Spleen (tissue), 13 donors: ENCODE measurements at regions of chr7 and their contacts with region 1.

Region 1: DNA sequence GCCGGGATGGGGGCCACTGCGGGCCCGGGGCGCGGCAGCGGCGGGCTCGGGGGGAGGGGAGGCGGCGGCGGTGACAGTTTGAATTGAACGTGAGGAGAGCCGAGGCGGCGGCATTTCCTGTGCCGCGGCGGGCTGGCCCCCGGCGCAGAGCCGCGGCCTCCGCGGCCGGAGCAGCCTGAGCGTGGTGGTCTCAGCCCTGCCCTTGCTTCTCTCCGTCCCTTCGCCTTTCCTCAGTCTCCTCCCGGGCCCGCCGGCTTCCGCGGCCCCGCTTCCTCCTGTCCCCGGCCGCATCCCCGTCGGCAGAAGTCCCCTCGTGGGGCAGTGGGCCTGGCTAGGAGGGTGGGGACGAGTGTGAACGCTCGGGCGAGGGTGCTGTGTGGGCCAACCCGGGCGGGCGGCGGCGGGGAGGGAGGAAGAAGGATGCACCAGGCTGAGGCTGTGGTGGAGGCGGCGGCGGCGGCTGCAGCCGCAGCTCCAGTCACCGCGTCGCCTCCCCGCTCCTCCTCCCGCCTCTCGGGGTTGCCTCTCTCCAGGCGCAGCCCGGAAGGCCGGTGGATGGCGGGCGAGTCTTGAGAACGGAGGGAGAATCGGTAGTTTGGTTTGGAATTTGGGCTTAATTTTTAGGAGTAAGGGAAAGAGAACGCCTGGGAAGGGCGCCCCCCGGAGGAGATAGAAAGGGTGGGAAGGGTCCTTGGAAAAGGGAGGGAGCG is 690 bp downstream of the SEPTIN7 start:
- DNase-seq: peak; percentile 96
- H3K4me3 ChIP-seq: peak overlapping the region; percentile 64 to 91 (median 79)
- H3K27ac ChIP-seq: peak overlapping the region; percentile 98 to 100 (median 99)
- H3K4me1 ChIP-seq: peaks cover 38 to 70% (median 56%) of the 10 kb centered on the region in 6 donors
- H3K27me3 ChIP-seq: no peaks in the 10 kb centered on the region
- CTCF ChIP-seq: peak in 9 of 11 experiments; percentile 14 to 66 (median 52)
- POLR2A ChIP-seq: no peak

Region 2: GRCh38 chr7:35716038-35716803 is 85.3 kb before region 1 on chr7:
- intact Hi-C with region 1: loop called (anchors 10 kb)
- DNase-seq: no peak
- H3K4me3 ChIP-seq: peak overlapping the region in 2 of 8 donors; percentile 7 to 13
- H3K27ac ChIP-seq: peak overlapping the region in 2 of 8 donors; percentile 9 to 37
- H3K4me1 ChIP-seq: peaks cover 0 to 11% (median 6%) of the 10 kb centered on the region in 6 donors
- H3K27me3 ChIP-seq: no peaks in the 10 kb centered on the region
- CTCF ChIP-seq: no peak
- POLR2A ChIP-seq: no peak

Region 3: GRCh38 chr7:35869810-35870209 is 68.3 kb after region 1 on chr7:
- intact Hi-C with region 1: loop called (anchors 5 kb)
- DNase-seq: no peak
- H3K4me3 ChIP-seq: no peak overlapping the region
- H3K27ac ChIP-seq: peak overlapping the region in 2 of 8 donors; percentile 26 to 50
- H3K4me1 ChIP-seq: peaks cover 0 to 39% (median 16%) of the 10 kb centered on the region in 6 donors
- H3K27me3 ChIP-seq: no peaks in the 10 kb centered on the region
- CTCF ChIP-seq: no peak
- POLR2A ChIP-seq: no peak